Activated B cell treated with CpG ODN at 0.5 μM for 24 hours (primary cell): ENCODE measurements at regions of chr14 and their contacts with region 1.

Region 1: GRCh38 chr14:53109105-53110041 is 43.8 kb downstream of the DDHD1 start:
- DNase-seq: no peak
- ATAC-seq: peak; percentile 42
- H3K4me3 Mint-ChIP-seq: no peak overlapping the region
- H3K27ac Mint-ChIP-seq: no peak overlapping the region
- H3K4me1 Mint-ChIP-seq: peaks cover under 1% of the 10 kb centered on the region
- H3K27me3 Mint-ChIP-seq: no peaks in the 10 kb centered on the region
- CTCF ChIP-seq: no peak

Region 2: DNA sequence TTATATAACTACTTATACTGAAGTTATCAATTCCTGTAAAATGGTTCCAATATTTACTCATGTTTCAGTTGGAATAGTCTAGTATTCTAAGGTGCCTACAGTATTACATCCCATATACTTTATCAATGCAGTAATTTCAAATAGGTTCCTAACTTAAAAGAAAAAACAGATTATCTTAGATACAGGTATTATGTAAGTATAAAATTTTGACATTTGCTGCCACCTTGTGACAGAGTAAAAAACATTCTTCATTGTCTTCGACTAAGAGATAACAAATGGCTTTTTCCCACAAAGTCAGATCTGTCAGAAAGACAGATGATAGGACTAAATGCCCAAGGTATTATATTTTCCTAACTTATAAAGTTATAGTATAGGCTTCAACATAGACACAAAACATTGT is 635.8 kb before region 1 on chr14:
- CTCF ChIA-PET with region 1: no interaction called
- POLR2A ChIA-PET with region 1: no interaction called
- intact Hi-C with region 1: no loop called
- DNase-seq: no peak
- ATAC-seq: no peak
- H3K4me3 Mint-ChIP-seq: no peak overlapping the region
- H3K27ac Mint-ChIP-seq: no peak overlapping the region
- H3K4me1 Mint-ChIP-seq: no peaks in the 10 kb centered on the region
- H3K27me3 Mint-ChIP-seq: no peaks in the 10 kb centered on the region
- CTCF ChIP-seq: no peak

Region 3: DNA sequence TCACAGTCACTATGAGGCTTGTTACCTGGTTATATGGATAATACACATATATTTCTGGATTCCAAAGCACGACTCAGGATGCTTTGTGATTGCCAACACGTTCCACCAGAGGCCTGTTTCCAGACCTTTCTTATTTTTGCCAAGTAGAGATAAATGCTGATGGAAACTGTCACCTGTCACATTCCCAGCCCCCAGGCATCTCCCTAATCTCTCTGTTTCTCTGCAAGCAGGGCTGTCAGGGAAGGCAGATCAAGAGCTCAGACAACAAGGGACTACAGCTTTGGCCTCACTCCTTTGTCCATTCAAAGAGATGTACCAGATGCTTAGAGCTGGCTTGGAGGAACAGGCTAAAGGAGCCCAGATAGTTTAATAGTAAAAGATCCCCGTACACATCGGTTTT is 65.5 kb after region 1 on chr14:
- CTCF ChIA-PET with region 1: no interaction called
- POLR2A ChIA-PET with region 1: no interaction called
- intact Hi-C with region 1: no loop called
- DNase-seq: no peak
- ATAC-seq: no peak
- H3K4me3 Mint-ChIP-seq: no peak overlapping the region
- H3K27ac Mint-ChIP-seq: no peak overlapping the region
- H3K4me1 Mint-ChIP-seq: no peaks in the 10 kb centered on the region
- H3K27me3 Mint-ChIP-seq: no peaks in the 10 kb centered on the region
- CTCF ChIP-seq: no peak

Region 4: DNA sequence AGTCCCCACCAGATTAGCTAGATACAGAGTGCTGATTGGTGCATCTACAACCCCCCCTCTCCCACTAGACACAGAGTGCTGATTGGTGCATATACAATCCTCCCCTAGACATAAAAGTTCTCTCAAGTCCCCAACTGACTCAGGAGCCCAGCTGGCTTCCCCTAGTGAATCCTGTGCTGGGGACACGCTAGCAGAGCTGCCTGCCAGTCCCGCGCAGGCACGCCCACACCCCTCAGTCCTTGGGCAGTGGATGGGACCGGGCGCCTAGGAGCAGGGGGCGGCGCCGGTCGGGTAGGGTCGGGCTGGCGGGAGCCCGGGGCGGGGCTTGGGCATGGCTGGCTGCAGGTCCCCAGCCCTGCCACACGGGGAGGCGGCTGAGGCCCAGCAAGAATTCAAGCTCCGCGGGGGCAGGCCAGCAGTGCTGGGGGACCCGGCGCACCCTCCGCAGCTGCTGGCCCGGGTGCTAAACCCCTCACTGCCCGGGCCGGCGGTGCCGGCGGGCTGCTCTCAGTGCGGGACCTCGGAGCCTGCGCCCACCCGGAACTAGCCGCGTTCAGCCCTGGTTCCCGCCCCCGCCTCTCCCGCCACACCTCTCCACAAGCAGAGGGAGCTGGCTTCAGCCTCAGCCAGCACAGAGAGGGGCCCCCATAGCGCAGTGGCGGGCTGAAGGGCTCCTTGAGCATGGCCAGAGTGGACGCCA is 108.1 kb after region 1 on chr14:
- CTCF ChIA-PET with region 1: no interaction called
- POLR2A ChIA-PET with region 1: no interaction called
- intact Hi-C with region 1: loop called (anchors 1 kb)
- DNase-seq: peak; percentile 78
- ATAC-seq: peak; percentile 98
- H3K4me3 Mint-ChIP-seq: peak overlapping the region; percentile 87
- H3K27ac Mint-ChIP-seq: peak overlapping the region; percentile 76
- H3K4me1 Mint-ChIP-seq: peaks cover 6% of the 10 kb centered on the region
- H3K27me3 Mint-ChIP-seq: no peaks in the 10 kb centered on the region
- CTCF ChIP-seq: no peak

Region 5: GRCh38 chr14:53550776-53551175 is 441.4 kb after region 1 on chr14:
- CTCF ChIA-PET with region 1: no interaction called
- POLR2A ChIA-PET with region 1: no interaction called
- intact Hi-C with region 1: no loop called
- DNase-seq: no peak
- ATAC-seq: no peak
- H3K4me3 Mint-ChIP-seq: no peak overlapping the region
- H3K27ac Mint-ChIP-seq: no peak overlapping the region
- H3K4me1 Mint-ChIP-seq: no peaks in the 10 kb centered on the region
- H3K27me3 Mint-ChIP-seq: peaks cover 3% of the 10 kb centered on the region
- CTCF ChIP-seq: no peak